Activated CD4-positive, alpha-beta memory T cell treated with anti-CD3 and anti-CD28 coated beads for 36 hours (primary cell): ENCODE measurements at regions of chr5 and their contacts with region 1.

Region 1: GRCh38 chr5:171336521-171337209 is 27.6 kb downstream of the TLX3 start:
- DNase-seq: peak; percentile 45
- H3K4me3 Mint-ChIP-seq: peak overlapping the region; percentile 44
- H3K27ac Mint-ChIP-seq: no peak overlapping the region
- H3K4me1 Mint-ChIP-seq: peaks cover 9% of the 10 kb centered on the region
- H3K27me3 Mint-ChIP-seq: peaks cover 29% of the 10 kb centered on the region

Region 2: GRCh38 chr5:170638454-170639220 is 698.0 kb before region 1 on chr5:
- CTCF ChIA-PET with region 1: no interaction called
- POLR2A ChIA-PET with region 1: no interaction called
- intact Hi-C with region 1: loop called (anchors 5 kb)
- DNase-seq: peak; percentile 77
- H3K4me3 Mint-ChIP-seq: no peak overlapping the region
- H3K27ac Mint-ChIP-seq: no peak overlapping the region
- H3K4me1 Mint-ChIP-seq: peaks cover 5% of the 10 kb centered on the region
- H3K27me3 Mint-ChIP-seq: peaks cover 4% of the 10 kb centered on the region

Region 3: DNA sequence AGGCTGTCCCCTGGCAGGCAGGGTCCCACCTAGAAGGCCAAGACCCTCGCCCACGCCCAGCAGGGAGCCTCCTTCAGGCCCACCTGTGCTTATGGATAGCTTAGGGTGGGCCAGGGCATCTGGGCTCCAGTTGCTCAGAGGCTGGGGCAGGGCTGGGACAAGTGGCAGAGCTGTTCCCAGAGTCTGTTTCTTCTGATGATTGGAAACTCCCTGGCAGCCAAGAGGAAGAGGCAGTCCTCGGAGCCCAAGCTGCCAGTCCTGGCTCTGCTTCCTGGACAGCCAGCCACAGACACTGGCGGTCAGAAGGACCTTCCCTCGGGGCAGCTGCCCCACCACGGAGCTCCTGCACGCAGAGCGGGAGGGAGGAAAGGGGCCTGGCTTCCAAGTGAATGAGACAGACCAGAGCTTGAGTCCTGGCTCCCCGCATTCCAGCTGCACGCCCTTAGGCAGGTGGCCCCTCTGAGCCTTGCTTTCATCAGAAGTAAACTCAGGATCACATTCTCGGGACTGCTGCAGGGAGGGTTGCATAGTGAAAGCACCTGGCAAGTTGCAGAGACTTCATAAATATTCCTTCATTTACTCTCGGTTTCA is 591.1 kb before region 1 on chr5:
- CTCF ChIA-PET with region 1: interaction called, 3 read pairs
- POLR2A ChIA-PET with region 1: no interaction called
- intact Hi-C with region 1: loop called (anchors 2 kb)
- DNase-seq: no peak
- H3K4me3 Mint-ChIP-seq: no peak overlapping the region
- H3K27ac Mint-ChIP-seq: no peak overlapping the region
- H3K4me1 Mint-ChIP-seq: peaks cover 2% of the 10 kb centered on the region
- H3K27me3 Mint-ChIP-seq: peaks cover 38% of the 10 kb centered on the region

Region 4: DNA sequence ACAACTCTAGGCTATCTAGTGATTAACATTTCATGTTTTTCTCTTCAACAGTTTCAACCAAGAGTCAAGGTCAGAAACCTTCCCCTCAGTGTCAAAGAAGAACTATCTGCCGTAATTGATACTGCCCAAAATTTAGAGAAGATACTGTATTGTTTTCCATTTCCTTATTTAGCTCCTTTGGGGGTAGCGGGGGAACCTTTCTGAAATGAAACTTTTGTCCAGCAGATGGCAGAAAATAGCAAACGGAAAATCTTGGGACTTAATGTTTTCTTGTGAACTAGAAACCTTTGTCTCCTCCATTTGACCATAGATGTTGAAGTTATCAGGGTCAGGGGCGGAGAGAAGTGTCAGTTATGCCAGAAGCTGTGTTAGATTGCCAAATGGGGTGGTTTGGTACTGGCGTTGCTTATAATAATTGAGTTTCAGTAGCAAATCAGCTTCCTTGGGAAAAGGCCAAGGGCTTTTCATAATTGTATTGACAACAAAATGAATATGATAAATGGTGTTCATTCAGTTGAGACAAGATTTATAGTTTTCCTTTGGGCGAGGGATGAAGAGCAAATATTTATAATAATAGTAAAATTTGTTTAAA is 129.3 kb before region 1 on chr5:
- CTCF ChIA-PET with region 1: interaction called, 72 read pairs
- POLR2A ChIA-PET with region 1: no interaction called
- intact Hi-C with region 1: loop called (anchors 1 kb)
- DNase-seq: peak; percentile 9
- H3K4me3 Mint-ChIP-seq: no peak overlapping the region
- H3K27ac Mint-ChIP-seq: no peak overlapping the region
- H3K4me1 Mint-ChIP-seq: no peaks in the 10 kb centered on the region
- H3K27me3 Mint-ChIP-seq: peaks cover 4% of the 10 kb centered on the region

Region 5: DNA sequence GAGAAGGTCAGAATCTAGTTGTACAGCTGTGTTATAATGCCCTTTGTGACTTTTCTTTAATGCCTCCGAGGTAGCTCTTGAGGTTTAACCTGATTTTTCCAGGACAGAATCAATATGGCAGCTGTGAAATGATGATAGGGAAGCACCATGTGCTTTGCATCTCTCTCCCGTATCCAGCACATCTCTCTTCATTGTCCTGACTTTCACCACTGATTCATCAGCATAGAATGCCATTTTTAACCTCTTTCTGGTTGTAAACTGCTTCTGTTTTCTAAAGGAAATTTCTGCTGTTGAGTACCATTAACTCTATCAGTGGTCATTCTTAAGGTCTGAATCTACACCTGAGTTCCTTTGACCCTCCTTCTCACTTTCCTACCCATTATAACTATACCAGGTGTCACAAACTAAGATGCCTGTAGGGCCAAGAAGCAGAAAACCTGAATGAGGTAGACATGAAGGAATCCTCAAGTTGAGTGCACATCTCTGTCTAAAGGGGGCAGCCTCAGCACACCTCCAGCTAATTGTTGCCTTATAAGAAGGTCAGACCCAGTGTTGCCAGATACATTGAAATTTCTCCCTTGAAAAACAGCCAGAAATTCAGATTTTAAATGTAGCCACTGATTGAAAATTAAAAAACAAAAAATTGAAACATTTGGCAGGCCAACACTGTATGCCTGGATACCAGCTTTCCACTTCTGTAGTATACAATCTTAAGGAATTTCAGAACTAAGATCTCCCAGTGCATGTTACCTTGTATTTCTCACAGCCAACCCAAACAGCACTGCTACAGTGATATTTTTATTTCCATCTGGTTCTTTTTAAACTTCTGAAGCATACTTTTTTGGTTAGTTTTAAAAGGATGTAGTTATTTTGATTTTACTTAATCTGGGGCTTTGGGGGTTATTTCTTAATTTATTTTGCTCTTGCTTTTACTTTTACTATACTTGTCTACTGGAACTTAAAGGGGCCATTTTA is 63.4 kb before region 1 on chr5:
- CTCF ChIA-PET with region 1: interaction called, 10 read pairs
- POLR2A ChIA-PET with region 1: no interaction called
- intact Hi-C with region 1: loop called (anchors 1 kb)
- DNase-seq: peak; percentile 16
- H3K4me3 Mint-ChIP-seq: no peak overlapping the region
- H3K27ac Mint-ChIP-seq: no peak overlapping the region
- H3K4me1 Mint-ChIP-seq: no peaks in the 10 kb centered on the region
- H3K27me3 Mint-ChIP-seq: peaks cover 5% of the 10 kb centered on the region